ENCODE measurements at regions of chr19 and their contacts with region 1.

Region 1: DNA sequence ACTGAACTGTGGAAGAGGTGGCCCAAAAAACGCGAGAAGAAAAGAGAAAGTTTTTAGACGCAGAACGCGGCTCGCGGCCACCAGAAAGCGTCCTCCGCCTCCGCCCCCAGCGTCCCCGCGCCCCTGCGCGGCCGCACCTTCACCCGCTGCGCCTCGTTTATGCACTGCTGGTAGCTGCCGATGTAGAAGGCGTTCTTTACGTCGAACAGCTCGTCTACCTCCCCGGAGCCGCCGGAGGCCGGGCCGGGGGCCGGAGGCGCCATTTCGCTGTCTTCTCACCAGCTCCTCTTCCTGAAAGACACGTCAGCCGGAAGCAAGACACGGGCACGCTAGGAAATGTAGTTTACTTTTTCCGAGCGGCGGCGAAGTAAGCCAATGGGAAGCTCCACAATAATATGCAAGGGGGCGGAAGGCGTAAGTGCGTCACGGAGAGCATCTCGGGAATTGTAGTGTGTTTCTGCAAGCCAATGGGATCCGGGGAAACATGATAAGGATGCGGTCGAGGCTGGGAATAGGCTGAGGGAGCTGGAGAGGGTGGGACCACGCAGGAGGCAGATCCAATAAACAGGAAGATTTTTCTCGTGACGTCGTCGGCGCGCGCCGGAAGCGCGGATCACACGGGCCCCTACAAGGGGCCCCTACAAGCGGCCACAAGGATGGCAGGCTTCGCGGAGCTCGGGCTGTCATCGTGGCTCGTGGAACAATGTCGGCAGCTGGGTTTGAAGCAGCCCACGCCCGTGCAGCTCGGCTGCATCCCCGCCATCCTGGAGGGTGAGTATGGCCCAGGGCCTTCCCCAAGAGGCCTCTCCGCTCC is at the starts of genes COPE and DDX49:
- DNase-seq: peak; percentile 92 to 100 (median 98)
- ATAC-seq: peak; percentile 93
- H3K4me3 ChIP-seq: peak within 1 kb of the TSS; percentile 92 to 94
- H3K4me3 Mint-ChIP-seq: peak within 1 kb of the TSS; percentile 93
- H3K27ac ChIP-seq: peak within 1 kb of the TSS; percentile 96 to 97
- H3K27ac Mint-ChIP-seq: peak within 1 kb of the TSS; percentile 94
- H3K4me1 ChIP-seq: peaks cover 30% of the 10 kb centered on the region
- H3K4me1 Mint-ChIP-seq: peaks cover 43% of the 10 kb centered on the region
- H3K27me3 ChIP-seq: no peaks in the 10 kb centered on the region
- H3K27me3 Mint-ChIP-seq: no peaks in the 10 kb centered on the region
- CTCF ChIP-seq: no peak
- total RNA-seq, gene COPE: 207 to 211 TPM
- total RNA-seq, gene DDX49: 67.1 to 72.8 TPM

Region 2: GRCh38 chr19:18450931-18451845 is 468.1 kb before region 1 on chr19:
- CTCF ChIA-PET with region 1: interaction called, 3 read pairs
- POLR2A ChIA-PET with region 1: no interaction called
- intact Hi-C with region 1: loop called in 1 of 2 experiments (anchors 2 kb)
- DNase-seq: peak; percentile 79 to 94 (median 85)
- ATAC-seq: peak; percentile 97
- H3K4me3 ChIP-seq: no peak overlapping the region
- H3K4me3 Mint-ChIP-seq: no peak overlapping the region
- H3K27ac ChIP-seq: no peak overlapping the region
- H3K27ac Mint-ChIP-seq: no peak overlapping the region
- H3K4me1 ChIP-seq: peaks cover 2% of the 10 kb centered on the region
- H3K4me1 Mint-ChIP-seq: peaks cover 2% of the 10 kb centered on the region
- H3K27me3 ChIP-seq: no peaks in the 10 kb centered on the region
- H3K27me3 Mint-ChIP-seq: no peaks in the 10 kb centered on the region
- CTCF ChIP-seq: peak; percentile 92

Region 3: GRCh38 chr19:18588611-18589379 is 330.5 kb before region 1 on chr19 and contains the start of gene REX1BD:
- CTCF ChIA-PET with region 1: interaction called, 3 read pairs
- POLR2A ChIA-PET with region 1: interaction called, 4 read pairs
- intact Hi-C with region 1: loop called (anchors 1 to 2 kb)
- DNase-seq: peak; percentile 71 to 94 (median 89)
- ATAC-seq: peak; percentile 81
- H3K4me3 ChIP-seq: peak within 1 kb of the TSS; percentile 62 to 83
- H3K4me3 Mint-ChIP-seq: peak within 1 kb of the TSS; percentile 93
- H3K27ac ChIP-seq: peak within 1 kb of the TSS; percentile 83 to 86
- H3K27ac Mint-ChIP-seq: peak within 1 kb of the TSS; percentile 95
- H3K4me1 ChIP-seq: peaks cover 31% of the 10 kb centered on the region
- H3K4me1 Mint-ChIP-seq: peaks cover 34% of the 10 kb centered on the region
- H3K27me3 ChIP-seq: no peaks in the 10 kb centered on the region
- H3K27me3 Mint-ChIP-seq: no peaks in the 10 kb centered on the region
- CTCF ChIP-seq: peak; percentile 77
- total RNA-seq, gene REX1BD: 85.6 to 91.1 TPM

Region 4: GRCh38 chr19:18798384-18799352 is 120.6 kb before region 1 on chr19:
- CTCF ChIA-PET with region 1: no interaction called
- POLR2A ChIA-PET with region 1: no interaction called
- intact Hi-C with region 1: no loop called
- DNase-seq: no peak
- ATAC-seq: no peak
- H3K4me3 ChIP-seq: no peak overlapping the region
- H3K4me3 Mint-ChIP-seq: no peak overlapping the region
- H3K27ac ChIP-seq: no peak overlapping the region
- H3K27ac Mint-ChIP-seq: no peak overlapping the region
- H3K4me1 ChIP-seq: no peaks in the 10 kb centered on the region
- H3K4me1 Mint-ChIP-seq: no peaks in the 10 kb centered on the region
- H3K27me3 ChIP-seq: peaks cover 0 to 9% of the 10 kb centered on the region in 2 experiments
- H3K27me3 Mint-ChIP-seq: peaks cover 26% of the 10 kb centered on the region
- CTCF ChIP-seq: no peak

Region 5: GRCh38 chr19:18831524-18832305 is 87.6 kb before region 1 on chr19 and contains the start of gene UPF1:
- CTCF ChIA-PET with region 1: no interaction called
- POLR2A ChIA-PET with region 1: interaction called, 12 read pairs
- intact Hi-C with region 1: loop called (anchors 2 kb)
- DNase-seq: peak; percentile 92 to 98 (median 96)
- ATAC-seq: peak; percentile 79
- H3K4me3 ChIP-seq: peak within 1 kb of the TSS; percentile 80 to 86
- H3K4me3 Mint-ChIP-seq: peak within 1 kb of the TSS; percentile 92
- H3K27ac ChIP-seq: peak within 1 kb of the TSS; percentile 69 to 73
- H3K27ac Mint-ChIP-seq: peak within 1 kb of the TSS; percentile 89
- H3K4me1 ChIP-seq: peaks cover 41% of the 10 kb centered on the region
- H3K4me1 Mint-ChIP-seq: peaks cover 38% of the 10 kb centered on the region
- H3K27me3 ChIP-seq: peaks cover 0 to 3% of the 10 kb centered on the region in 2 experiments
- H3K27me3 Mint-ChIP-seq: peaks cover 2% of the 10 kb centered on the region
- CTCF ChIP-seq: no peak
- total RNA-seq, gene UPF1: 157 to 175 TPM

Region 6: GRCh38 chr19:18895038-18895823 is 24.1 kb before region 1 on chr19:
- CTCF ChIA-PET with region 1: no interaction called
- POLR2A ChIA-PET with region 1: no interaction called
- intact Hi-C with region 1: no loop called
- DNase-seq: no peak
- ATAC-seq: no peak
- H3K4me3 ChIP-seq: no peak overlapping the region
- H3K4me3 Mint-ChIP-seq: peak overlapping the region; percentile 29
- H3K27ac ChIP-seq: no peak overlapping the region
- H3K27ac Mint-ChIP-seq: no peak overlapping the region
- H3K4me1 ChIP-seq: peaks cover 7% of the 10 kb centered on the region
- H3K4me1 Mint-ChIP-seq: peaks cover 9% of the 10 kb centered on the region
- H3K27me3 ChIP-seq: peaks cover 7 to 16% of the 10 kb centered on the region in 2 experiments
- H3K27me3 Mint-ChIP-seq: peaks cover 22% of the 10 kb centered on the region
- CTCF ChIP-seq: no peak

Region 7: GRCh38 chr19:18940769-18941407 is 21.6 kb after region 1 on chr19 and contains the start of gene HOMER3:
- CTCF ChIA-PET with region 1: no interaction called
- POLR2A ChIA-PET with region 1: no interaction called
- intact Hi-C with region 1: loop called (anchors 1 to 2 kb)
- DNase-seq: peak; percentile 53 to 85 (median 76)
- ATAC-seq: peak; percentile 87
- H3K4me3 ChIP-seq: peak within 1 kb of the TSS in 1 of 2 experiments; percentile 28
- H3K4me3 Mint-ChIP-seq: peak within 1 kb of the TSS; percentile 69
- H3K27ac ChIP-seq: no peak within 1 kb of the TSS
- H3K27ac Mint-ChIP-seq: no peak within 1 kb of the TSS
- H3K4me1 ChIP-seq: peaks cover 10% of the 10 kb centered on the region
- H3K4me1 Mint-ChIP-seq: peaks cover 8% of the 10 kb centered on the region
- H3K27me3 ChIP-seq: peaks cover 4 to 18% of the 10 kb centered on the region in 2 experiments
- H3K27me3 Mint-ChIP-seq: peaks cover 24% of the 10 kb centered on the region
- CTCF ChIP-seq: no peak
- total RNA-seq, gene HOMER3: 0.90 TPM in 1 of 2 experiments, not detected in the other

Region 8: GRCh38 chr19:18975011-18975410 is 55.7 kb after region 1 on chr19:
- CTCF ChIA-PET with region 1: no interaction called
- POLR2A ChIA-PET with region 1: no interaction called
- intact Hi-C with region 1: no loop called
- DNase-seq: no peak
- ATAC-seq: no peak
- H3K4me3 ChIP-seq: no peak overlapping the region
- H3K4me3 Mint-ChIP-seq: no peak overlapping the region
- H3K27ac ChIP-seq: no peak overlapping the region
- H3K27ac Mint-ChIP-seq: no peak overlapping the region
- H3K4me1 ChIP-seq: no peaks in the 10 kb centered on the region
- H3K4me1 Mint-ChIP-seq: no peaks in the 10 kb centered on the region
- H3K27me3 ChIP-seq: peaks cover 0 to 7% of the 10 kb centered on the region in 2 experiments
- H3K27me3 Mint-ChIP-seq: peaks cover 13% of the 10 kb centered on the region
- CTCF ChIP-seq: no peak

Region 9: GRCh38 chr19:19063183-19064097 is 144.1 kb after region 1 on chr19 and contains the start of gene SLC25A42:
- CTCF ChIA-PET with region 1: no interaction called
- POLR2A ChIA-PET with region 1: interaction called, 5 read pairs
- intact Hi-C with region 1: loop called (anchors 1 kb)
- DNase-seq: peak; percentile 97 to 100 (median 99)
- ATAC-seq: peak; percentile 90
- H3K4me3 ChIP-seq: peak within 1 kb of the TSS; percentile 61 to 87
- H3K4me3 Mint-ChIP-seq: peak within 1 kb of the TSS; percentile 89
- H3K27ac ChIP-seq: peak within 1 kb of the TSS; percentile 47 to 77
- H3K27ac Mint-ChIP-seq: peak within 1 kb of the TSS; percentile 88
- H3K4me1 ChIP-seq: peaks cover 23% of the 10 kb centered on the region
- H3K4me1 Mint-ChIP-seq: peaks cover 32% of the 10 kb centered on the region
- H3K27me3 ChIP-seq: no peaks in the 10 kb centered on the region
- H3K27me3 Mint-ChIP-seq: no peaks in the 10 kb centered on the region
- CTCF ChIP-seq: no peak
- total RNA-seq, gene SLC25A42: 8.3 to 10.6 TPM

Region 10: DNA sequence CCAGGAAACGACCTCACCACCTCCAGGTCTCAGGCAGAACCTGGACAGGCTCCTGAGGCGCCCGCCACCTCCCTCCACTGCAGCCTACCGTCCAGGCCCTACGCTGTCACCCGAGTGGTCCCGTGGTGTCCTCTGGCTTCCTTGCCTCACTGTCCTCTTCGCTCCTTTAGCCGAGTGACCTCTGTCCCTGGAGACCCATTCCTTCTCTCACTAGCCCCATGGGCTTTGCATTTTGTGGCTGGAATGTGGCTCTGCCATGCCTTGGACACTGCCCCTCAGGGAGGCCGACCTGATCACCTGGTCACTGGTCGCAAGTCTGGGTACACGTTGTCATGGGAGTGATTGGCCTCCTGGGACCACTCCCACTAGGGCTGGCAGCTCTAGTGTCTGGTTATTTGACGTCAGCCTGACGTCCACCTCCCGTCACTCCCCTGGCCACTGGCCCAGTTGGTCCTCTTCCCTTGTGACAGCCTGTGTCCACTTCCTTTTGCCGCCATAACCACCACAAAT is 162.4 kb after region 1 on chr19:
- CTCF ChIA-PET with region 1: no interaction called
- POLR2A ChIA-PET with region 1: no interaction called
- intact Hi-C with region 1: no loop called
- DNase-seq: no peak
- ATAC-seq: no peak
- H3K4me3 ChIP-seq: no peak overlapping the region
- H3K4me3 Mint-ChIP-seq: no peak overlapping the region
- H3K27ac ChIP-seq: no peak overlapping the region
- H3K27ac Mint-ChIP-seq: no peak overlapping the region
- H3K4me1 ChIP-seq: no peaks in the 10 kb centered on the region
- H3K4me1 Mint-ChIP-seq: peaks cover 13% of the 10 kb centered on the region
- H3K27me3 ChIP-seq: no peaks in the 10 kb centered on the region
- H3K27me3 Mint-ChIP-seq: no peaks in the 10 kb centered on the region
- CTCF ChIP-seq: no peak

Region 11: GRCh38 chr19:19320362-19321142 is 401.3 kb after region 1 on chr19 and contains the starts of genes MAU2 and SUGP1:
- CTCF ChIA-PET with region 1: no interaction called
- POLR2A ChIA-PET with region 1: no interaction called
- intact Hi-C with region 1: loop called (anchors 1 to 5 kb)
- DNase-seq: peak; percentile 81 to 95 (median 88)
- ATAC-seq: peak; percentile 90
- H3K4me3 ChIP-seq: peak within 1 kb of the TSS; percentile 88 to 94
- H3K4me3 Mint-ChIP-seq: peak within 1 kb of the TSS; percentile 99
- H3K27ac ChIP-seq: peak within 1 kb of the TSS; percentile 88 to 97
- H3K27ac Mint-ChIP-seq: peak within 1 kb of the TSS; percentile 99
- H3K4me1 ChIP-seq: peaks cover 35% of the 10 kb centered on the region
- H3K4me1 Mint-ChIP-seq: peaks cover 40% of the 10 kb centered on the region
- H3K27me3 ChIP-seq: no peaks in the 10 kb centered on the region
- H3K27me3 Mint-ChIP-seq: no peaks in the 10 kb centered on the region
- CTCF ChIP-seq: no peak
- total RNA-seq, gene MAU2: 137 to 139 TPM
- total RNA-seq, gene SUGP1: 60.9 to 68.2 TPM

Measured in CD8-positive, alpha-beta T cell (primary cell).